ENCODE measurements at regions of chr3 and their contacts with region 1.

Region 1: GRCh38 chr3:168865022-168865551 is 769.4 kb upstream of the GOLIM4 start:
- DNase-seq: peak; percentile 71
- H3K4me3 ChIP-seq: no peak overlapping the region
- H3K27ac ChIP-seq: no peak overlapping the region
- H3K4me1 ChIP-seq: no peaks in the 10 kb centered on the region
- H3K27me3 ChIP-seq: peaks cover 0 to 3% of the 10 kb centered on the region in 2 experiments
- CTCF ChIP-seq: peak; percentile 48 to 52
- POLR2A ChIP-seq: no peak

Region 2: DNA sequence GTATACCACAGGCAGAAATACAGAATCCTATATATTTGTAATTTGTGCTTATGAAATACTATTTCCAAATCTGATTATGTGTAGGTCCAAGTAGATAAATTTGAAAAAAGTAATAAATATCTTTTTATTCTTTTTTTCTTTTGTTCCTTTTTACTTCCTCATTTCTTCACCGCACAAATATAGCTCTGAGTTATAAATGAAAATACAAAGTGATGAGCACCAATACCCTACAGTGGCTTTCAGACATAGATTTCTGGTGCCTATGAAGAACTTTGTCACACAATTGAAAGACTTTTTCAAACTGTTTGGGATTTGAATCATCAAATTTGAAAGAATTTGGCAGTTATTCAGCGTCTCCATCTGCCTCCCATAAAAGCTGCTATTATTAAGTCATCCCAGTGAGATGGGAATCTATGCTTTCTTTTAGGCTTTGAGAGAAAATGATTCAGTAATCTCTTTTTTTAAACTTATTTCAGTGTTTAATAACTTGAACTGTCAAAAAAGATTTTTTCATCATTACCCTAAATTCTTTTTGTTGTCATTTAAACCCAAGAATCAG is 405.8 kb before region 1 on chr3:
- CTCF ChIA-PET with region 1: no interaction called
- POLR2A ChIA-PET with region 1: no interaction called
- dilution Hi-C with region 1: no loop called
- intact Hi-C with region 1: no loop called
- DNase-seq: no peak
- H3K4me3 ChIP-seq: no peak overlapping the region
- H3K27ac ChIP-seq: no peak overlapping the region
- H3K4me1 ChIP-seq: no peaks in the 10 kb centered on the region
- H3K27me3 ChIP-seq: no peaks in the 10 kb centered on the region
- CTCF ChIP-seq: no peak
- POLR2A ChIP-seq: no peak

Region 3: GRCh38 chr3:168878655-168879054 is 13.6 kb after region 1 on chr3:
- CTCF ChIA-PET with region 1: interaction called, 76 read pairs
- POLR2A ChIA-PET with region 1: no interaction called
- dilution Hi-C with region 1: no loop called
- intact Hi-C with region 1: no loop called
- DNase-seq: peak; percentile 31
- H3K4me3 ChIP-seq: no peak overlapping the region
- H3K27ac ChIP-seq: peak overlapping the region; percentile 13
- H3K4me1 ChIP-seq: peaks cover 30% of the 10 kb centered on the region
- H3K27me3 ChIP-seq: no peaks in the 10 kb centered on the region
- CTCF ChIP-seq: no peak
- POLR2A ChIP-seq: no peak

Region 4: GRCh38 chr3:168926426-168926825 is 61.3 kb after region 1 on chr3:
- CTCF ChIA-PET with region 1: interaction called, 13 read pairs
- POLR2A ChIA-PET with region 1: no interaction called
- dilution Hi-C with region 1: no loop called
- intact Hi-C with region 1: no loop called
- DNase-seq: no peak
- H3K4me3 ChIP-seq: no peak overlapping the region
- H3K27ac ChIP-seq: no peak overlapping the region
- H3K4me1 ChIP-seq: no peaks in the 10 kb centered on the region
- H3K27me3 ChIP-seq: no peaks in the 10 kb centered on the region
- CTCF ChIP-seq: no peak
- POLR2A ChIP-seq: no peak

Region 5: DNA sequence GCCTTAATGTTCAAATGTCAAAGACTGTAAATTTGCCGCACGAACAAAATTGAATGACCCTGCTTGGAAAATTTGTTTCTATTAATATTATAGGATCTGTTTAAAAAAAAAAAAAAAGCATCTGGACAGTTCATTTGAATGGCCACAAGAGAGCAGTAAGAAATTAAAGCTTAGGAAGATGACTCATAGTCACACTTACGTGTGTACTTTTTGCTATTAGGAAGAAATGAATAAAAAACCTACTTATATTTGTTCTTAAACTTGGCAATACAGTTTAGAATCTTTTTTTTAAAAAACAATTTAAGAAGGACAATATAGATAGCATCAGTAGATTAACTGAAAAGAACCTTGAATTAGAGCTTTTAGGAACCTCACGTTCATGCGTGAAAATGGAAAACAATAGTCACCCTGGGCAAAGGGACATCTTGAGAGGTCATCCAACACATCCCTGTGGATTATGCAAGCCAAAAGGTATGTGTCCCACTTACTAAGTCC is 176.6 kb after region 1 on chr3:
- CTCF ChIA-PET with region 1: interaction called, 32 read pairs
- POLR2A ChIA-PET with region 1: no interaction called
- dilution Hi-C with region 1: no loop called
- intact Hi-C with region 1: loop called (anchors 1 kb)
- DNase-seq: peak; percentile 87
- H3K4me3 ChIP-seq: no peak overlapping the region
- H3K27ac ChIP-seq: peak overlapping the region; percentile 48
- H3K4me1 ChIP-seq: peaks cover 27% of the 10 kb centered on the region
- H3K27me3 ChIP-seq: no peaks in the 10 kb centered on the region
- CTCF ChIP-seq: peak; percentile 23 to 29
- POLR2A ChIP-seq: no peak

Region 6: GRCh38 chr3:169668957-169669681 is 804.0 kb after region 1 on chr3:
- CTCF ChIA-PET with region 1: interaction called, 108 read pairs
- POLR2A ChIA-PET with region 1: interaction called, 3 read pairs
- dilution Hi-C with region 1: no loop called
- intact Hi-C with region 1: loop called (anchors 1 kb)
- DNase-seq: peak; percentile 84
- H3K4me3 ChIP-seq: peak overlapping the region; percentile 45 to 77 (median 70)
- H3K27ac ChIP-seq: peak overlapping the region; percentile 51
- H3K4me1 ChIP-seq: peaks cover 42% of the 10 kb centered on the region
- H3K27me3 ChIP-seq: no peaks in the 10 kb centered on the region
- CTCF ChIP-seq: peak; percentile 94
- POLR2A ChIP-seq: no peak